ENCODE measurements at regions of chr9 and their contacts with region 1.

Region 1: GRCh38 chr9:130023144-130023787 is 19.7 kb downstream of the FNBP1 start:
- DNase-seq: no peak
- H3K4me3 Mint-ChIP-seq: peak overlapping the region; percentile 56
- H3K27ac Mint-ChIP-seq: peak overlapping the region; percentile 97
- H3K4me1 Mint-ChIP-seq: peaks cover 68% of the 10 kb centered on the region
- H3K27me3 Mint-ChIP-seq: no peaks in the 10 kb centered on the region

Region 2: DNA sequence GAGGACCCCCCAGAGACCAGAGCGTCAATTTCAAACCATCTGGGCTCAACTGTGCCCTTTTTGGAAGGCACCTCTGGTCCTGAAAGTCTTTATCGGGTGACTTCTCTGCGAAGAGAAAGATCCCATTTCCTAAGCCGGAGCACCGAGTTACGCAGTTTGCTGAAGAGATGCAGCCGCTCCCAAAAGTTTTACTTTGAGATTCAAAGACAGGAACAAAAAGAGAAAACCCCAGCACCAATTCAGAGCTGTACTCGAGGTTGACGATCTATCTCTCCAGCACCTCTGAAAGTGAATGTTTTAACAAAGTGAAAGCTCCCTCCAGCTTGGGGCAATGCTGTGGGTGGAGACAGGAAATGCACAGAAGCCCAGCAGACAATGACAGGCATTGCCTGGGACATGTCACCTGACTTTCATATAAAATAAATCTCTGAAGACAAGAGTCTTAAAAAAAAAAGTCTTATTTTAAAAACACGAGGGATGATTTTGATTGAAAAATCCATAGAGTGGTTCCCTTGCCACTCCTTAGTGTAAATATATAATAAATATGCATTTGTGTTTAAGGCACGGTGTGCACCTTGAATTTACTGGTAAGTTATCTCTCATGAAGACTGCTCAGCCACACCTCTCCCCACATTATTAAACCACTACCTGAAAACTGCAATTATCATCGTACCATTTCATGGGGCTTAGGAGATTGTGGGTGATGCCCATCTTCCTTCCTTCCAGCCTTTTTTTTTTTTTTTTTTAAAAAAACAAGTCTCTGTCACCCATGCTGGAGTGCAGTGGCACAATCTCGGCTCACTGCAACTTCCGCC is 60.2 kb before region 1 on chr9:
- intact Hi-C with region 1: loop called (anchors 2 kb)
- DNase-seq: peak; percentile 93
- H3K4me3 Mint-ChIP-seq: peak overlapping the region; percentile 84
- H3K27ac Mint-ChIP-seq: peak overlapping the region; percentile 94
- H3K4me1 Mint-ChIP-seq: peaks cover 68% of the 10 kb centered on the region
- H3K27me3 Mint-ChIP-seq: no peaks in the 10 kb centered on the region

Region 3: GRCh38 chr9:129988607-129989361 is 34.5 kb before region 1 on chr9:
- intact Hi-C with region 1: loop called (anchors 1 kb)
- DNase-seq: peak; percentile 66
- H3K4me3 Mint-ChIP-seq: peak overlapping the region; percentile 31
- H3K27ac Mint-ChIP-seq: peak overlapping the region; percentile 92
- H3K4me1 Mint-ChIP-seq: peaks cover 49% of the 10 kb centered on the region
- H3K27me3 Mint-ChIP-seq: no peaks in the 10 kb centered on the region

Measured in activated CD4-positive, alpha-beta T cell treated with anti-CD3 and anti-CD28 coated beads, Interleukin-2, amount 10 ng/mL, durations not matched to agents 24 days and 14 days (primary cell).